ENCODE measurements at regions of chr16 and their contacts with region 1.

Region 1: GRCh38 chr16:73329363-73330292 is 281.7 kb upstream of the ZFHX3 start:
- H3K4me3 ChIP-seq: no peak overlapping the region
- H3K27ac ChIP-seq: no peak overlapping the region
- H3K4me1 ChIP-seq: no peaks in the 10 kb centered on the region
- CTCF ChIP-seq: no peak

Region 2: DNA sequence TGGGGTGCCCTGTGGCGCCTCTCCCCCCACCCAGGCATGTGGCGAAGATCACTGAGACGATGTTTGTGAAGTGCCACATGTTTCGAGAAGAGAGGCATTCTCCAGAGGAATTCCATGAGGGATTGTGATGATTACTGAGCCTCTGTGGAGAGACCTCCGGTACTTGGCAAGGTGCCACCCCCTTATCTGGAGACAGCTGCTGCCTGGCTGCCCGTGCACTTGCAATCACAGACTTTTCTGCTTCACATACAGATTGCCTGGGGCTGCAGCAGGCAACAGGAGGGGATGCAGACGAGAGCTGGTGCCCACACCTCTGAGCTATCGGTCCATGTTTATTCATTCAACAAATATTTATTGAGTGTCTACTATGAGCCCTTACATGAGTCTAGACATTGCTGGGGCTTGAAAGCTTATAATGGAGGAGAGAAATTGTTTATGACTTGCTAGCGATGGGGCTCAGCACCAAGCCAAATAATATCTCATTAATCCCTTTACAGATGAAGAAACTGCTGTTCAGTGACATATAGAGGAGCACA is 35.5 kb after region 1 on chr16:
- CTCF ChIA-PET with region 1: no interaction called
- POLR2A ChIA-PET with region 1: interaction called, 11 read pairs
- H3K4me3 ChIP-seq: no peak overlapping the region
- H3K27ac ChIP-seq: no peak overlapping the region
- H3K4me1 ChIP-seq: no peaks in the 10 kb centered on the region; the same call in 1 of the 2 replicates
- CTCF ChIP-seq: no peak

Measured in HEK293 (cell line).